Gastrocnemius medialis (tissue), 4 donors: ENCODE measurements at regions of chr17 and their contacts with region 1.

Region 1: DNA sequence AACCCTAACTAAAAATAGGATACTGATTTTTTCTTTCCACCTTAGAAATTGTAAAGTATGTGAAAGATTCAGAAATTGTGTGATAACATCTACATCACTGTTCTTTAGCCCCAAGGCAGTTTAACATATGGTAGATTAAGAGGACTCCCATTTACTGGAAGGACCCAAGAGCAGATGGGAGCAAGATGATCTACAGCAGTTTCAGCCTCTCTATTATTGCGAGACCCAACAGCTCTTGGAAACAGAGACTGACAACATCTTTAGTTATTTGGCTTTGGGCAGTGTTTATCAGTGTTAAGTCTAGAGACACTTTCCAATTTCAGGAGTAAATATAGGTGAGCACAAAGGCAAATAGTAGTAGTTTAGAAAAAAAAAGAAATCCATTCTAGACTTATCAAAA is 124.9 kb upstream of the CORO6 start:
- DNase-seq: no peak
- ATAC-seq: peak in 1 of 2 donors; percentile 31
- H3K4me3 ChIP-seq: no peak overlapping the region
- H3K27ac ChIP-seq: peak overlapping the region; percentile 91 to 97 (median 94)
- H3K4me1 ChIP-seq: peaks cover 71 to 72% of the 10 kb centered on the region in 2 donors
- H3K27me3 ChIP-seq: no peaks in the 10 kb centered on the region
- CTCF ChIP-seq: no peak
- POLR2A ChIP-seq: no peak

Region 2: DNA sequence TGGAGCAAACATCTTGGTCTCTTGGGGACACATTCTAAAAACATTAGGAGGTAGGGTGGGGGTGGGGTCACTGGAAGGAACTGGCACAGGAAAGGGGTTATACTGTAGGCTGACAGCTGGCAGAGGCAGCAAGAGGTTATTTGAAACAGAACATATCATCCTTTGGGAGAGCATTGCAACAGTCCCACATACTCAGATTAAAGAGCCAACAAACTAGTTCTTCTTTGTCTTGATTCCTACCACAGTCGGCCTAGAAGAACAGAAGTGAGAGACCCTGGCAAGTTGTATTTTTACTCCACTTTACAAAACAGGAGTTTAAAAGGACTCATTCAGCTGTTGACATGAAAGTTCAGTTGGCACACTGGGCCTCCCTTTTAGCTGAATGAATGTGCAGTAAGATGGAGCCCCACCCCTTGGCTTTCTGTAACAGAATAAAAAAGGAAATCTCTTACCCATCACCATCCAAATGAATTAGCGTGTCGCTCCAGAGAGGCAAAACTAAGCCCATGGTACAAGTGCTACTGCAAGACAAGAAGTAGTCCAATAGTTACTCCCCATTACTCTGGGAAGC is 70.4 kb before region 1 on chr17:
- in situ Hi-C with region 1: no loop called
- intact Hi-C with region 1: loop called (anchors 2 kb)
- DNase-seq: peak; percentile 89 to 94
- ATAC-seq: peak; percentile 89 to 91
- H3K4me3 ChIP-seq: peak overlapping the region; percentile 14 to 67 (median 49)
- H3K27ac ChIP-seq: peak overlapping the region; percentile 97 to 100 (median 98)
- H3K4me1 ChIP-seq: peaks cover 56 to 60% of the 10 kb centered on the region in 2 donors
- H3K27me3 ChIP-seq: no peaks in the 10 kb centered on the region
- CTCF ChIP-seq: no peak
- POLR2A ChIP-seq: peak; percentile 18 to 41

Region 3: GRCh38 chr17:29710891-29711418 is 36.7 kb before region 1 on chr17:
- in situ Hi-C with region 1: no loop called
- intact Hi-C with region 1: loop called (anchors 2 kb)
- DNase-seq: peak in 1 of 2 donors; percentile 30
- ATAC-seq: peak; percentile 10 to 31
- H3K4me3 ChIP-seq: peak overlapping the region in 2 of 4 donors; percentile 6 to 21
- H3K27ac ChIP-seq: peak overlapping the region; percentile 82 to 100 (median 93)
- H3K4me1 ChIP-seq: peaks cover 81 to 83% of the 10 kb centered on the region in 2 donors
- H3K27me3 ChIP-seq: no peaks in the 10 kb centered on the region
- CTCF ChIP-seq: no peak
- POLR2A ChIP-seq: peak; percentile 48 to 72